Activated B cell treated with CpG ODN at 0.5 μM for 24 hours (primary cell): ENCODE measurements at regions of chr6 and their contacts with region 1.

Region 1: DNA sequence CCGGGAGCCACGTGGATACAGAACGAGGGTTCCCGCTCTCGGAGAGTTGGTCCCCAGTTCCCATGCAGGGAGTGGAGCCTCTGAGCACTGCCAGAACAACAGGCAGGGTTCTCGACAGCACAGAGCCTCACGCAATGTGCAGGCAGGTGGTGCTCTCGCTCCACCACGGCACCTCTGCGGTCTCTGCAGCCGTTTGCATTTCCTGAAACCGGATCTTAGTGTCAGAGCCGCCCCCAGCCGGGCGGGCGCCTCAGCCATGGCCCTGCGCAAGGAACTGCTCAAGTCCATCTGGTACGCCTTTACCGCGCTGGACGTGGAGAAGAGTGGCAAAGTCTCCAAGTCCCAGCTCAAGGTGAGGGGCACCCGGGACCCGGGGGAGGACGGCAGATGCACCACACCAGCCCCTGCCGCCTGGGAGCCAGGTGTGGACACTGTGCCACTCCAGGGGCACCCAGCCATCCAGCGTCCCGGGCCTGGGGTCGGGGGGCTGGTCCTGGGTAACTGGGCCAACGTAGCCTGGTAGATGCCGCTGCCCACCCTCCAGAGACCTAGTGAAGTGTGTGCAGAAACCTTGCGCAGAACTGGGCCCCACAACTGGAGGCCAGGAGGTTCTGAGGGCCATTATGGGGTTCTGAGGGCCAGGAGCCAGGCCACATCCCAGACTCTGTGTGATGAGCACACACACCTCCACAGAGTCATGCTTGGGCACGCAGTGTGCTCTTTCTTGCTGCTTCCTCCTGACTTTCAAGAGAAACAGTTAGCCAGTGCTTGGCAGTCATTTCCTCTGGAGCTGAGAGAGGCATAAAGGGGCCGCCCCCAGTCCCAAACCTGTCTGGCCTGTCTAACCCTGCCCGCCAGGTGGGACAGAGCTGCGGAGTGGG is at the start of gene DEF6:
- DNase-seq: peak; percentile 74
- ATAC-seq: peak; percentile 78
- H3K4me3 Mint-ChIP-seq: peak within 1 kb of the TSS; percentile 85
- H3K27ac Mint-ChIP-seq: peak within 1 kb of the TSS; percentile 97
- H3K4me1 Mint-ChIP-seq: peaks cover 56% of the 10 kb centered on the region
- H3K27me3 Mint-ChIP-seq: no peaks in the 10 kb centered on the region
- CTCF ChIP-seq: peak; percentile 42
- total RNA-seq, gene DEF6: 68.7 and 79.9 TPM in 2 replicates

Region 2: DNA sequence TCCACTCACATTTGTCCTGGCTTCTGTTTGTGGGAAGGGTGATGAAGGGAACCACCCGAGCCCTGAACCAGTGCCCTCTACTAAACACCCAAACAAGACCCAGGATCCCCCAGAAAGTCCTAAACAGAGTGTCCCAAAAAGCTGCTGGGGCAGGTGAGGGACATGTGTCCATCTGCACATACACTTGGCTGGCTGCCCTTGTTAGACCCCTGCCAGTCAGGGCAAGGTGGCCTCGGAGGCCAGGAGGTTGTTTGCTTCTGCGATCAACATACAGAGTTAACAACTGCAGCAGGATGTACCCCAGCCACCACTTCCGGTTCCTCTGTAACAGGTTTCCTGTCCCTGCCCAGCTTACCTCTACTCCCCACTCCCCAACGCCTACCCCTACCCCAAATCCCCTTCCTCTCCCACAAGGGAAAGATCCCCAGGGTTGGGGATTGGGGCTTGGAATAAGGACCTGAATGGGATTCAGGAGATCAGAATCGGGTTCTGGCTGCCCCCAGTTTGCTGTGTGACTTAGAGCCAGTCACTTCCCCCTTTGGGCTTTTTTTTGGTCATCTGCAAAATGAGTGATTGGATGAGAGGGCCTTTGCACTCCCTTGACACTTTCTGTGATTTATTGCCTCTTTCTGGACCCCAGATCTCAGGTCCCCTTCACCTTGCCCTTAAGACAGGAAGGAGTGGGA is 13.7 kb after region 1 on chr6:
- CTCF ChIA-PET with region 1: interaction called, 3 read pairs
- POLR2A ChIA-PET with region 1: interaction called, 15 read pairs
- intact Hi-C with region 1: loop called (anchors 1 kb)
- DNase-seq: no peak
- ATAC-seq: peak; percentile 67
- H3K4me3 Mint-ChIP-seq: peak overlapping the region; percentile 76
- H3K27ac Mint-ChIP-seq: peak overlapping the region; percentile 96
- H3K4me1 Mint-ChIP-seq: peaks cover 68% of the 10 kb centered on the region
- H3K27me3 Mint-ChIP-seq: no peaks in the 10 kb centered on the region
- CTCF ChIP-seq: no peak

Region 3: GRCh38 chr6:35342258-35343091 is 44.6 kb after region 1 on chr6 and contains the start of gene PPARD:
- CTCF ChIA-PET with region 1: interaction called, 11 read pairs
- POLR2A ChIA-PET with region 1: interaction called, 5 read pairs
- intact Hi-C with region 1: loop called (anchors 1 kb)
- DNase-seq: peak; percentile 99
- ATAC-seq: peak; percentile 98
- H3K4me3 Mint-ChIP-seq: peak within 1 kb of the TSS; percentile 87
- H3K27ac Mint-ChIP-seq: peak within 1 kb of the TSS; percentile 91
- H3K4me1 Mint-ChIP-seq: peaks cover 59% of the 10 kb centered on the region
- H3K27me3 Mint-ChIP-seq: no peaks in the 10 kb centered on the region
- CTCF ChIP-seq: peak; percentile 62
- total RNA-seq, gene PPARD: 20.2 and 21.4 TPM in 2 replicates

Region 4: DNA sequence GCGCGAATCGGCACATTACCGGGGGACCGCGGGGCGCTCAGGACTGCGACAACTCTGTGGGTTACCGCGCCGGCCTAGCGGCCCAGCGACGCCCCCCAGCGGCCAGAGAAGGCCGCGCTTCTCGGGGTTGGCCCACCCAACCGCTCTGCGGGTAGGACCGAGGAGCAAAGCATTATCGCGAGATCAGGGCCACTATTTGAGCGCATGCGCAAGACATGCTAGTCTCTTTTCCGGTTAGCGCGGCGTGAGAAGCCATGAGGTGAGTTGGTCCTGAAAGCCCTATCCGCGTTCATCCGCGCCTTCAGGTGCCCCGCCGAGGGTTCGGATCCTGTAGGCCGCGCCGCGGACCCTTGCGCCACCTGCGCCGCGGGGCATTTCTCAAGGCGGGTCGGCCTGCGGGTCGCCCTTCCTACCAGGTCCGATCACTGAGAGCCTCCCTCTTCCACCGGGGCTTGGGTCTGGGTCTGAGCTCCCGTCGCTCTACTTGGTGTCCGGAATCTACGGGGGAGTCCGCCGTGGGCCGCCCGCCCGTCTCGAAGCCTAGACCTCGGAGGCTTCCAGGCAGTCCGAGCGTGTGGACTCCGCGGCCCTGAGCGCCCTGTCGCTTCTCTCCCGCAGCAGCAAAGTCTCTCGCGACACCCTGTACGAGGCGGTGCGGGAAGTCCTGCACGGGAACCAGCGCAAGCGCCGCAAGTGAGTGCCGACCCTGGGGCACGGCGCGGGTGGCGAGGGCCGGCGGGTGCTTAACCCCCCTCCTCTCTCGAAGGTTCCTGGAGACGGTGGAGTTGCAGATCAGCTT is 170.5 kb after region 1 on chr6 and contains the start of gene RPL10A:
- CTCF ChIA-PET with region 1: interaction called, 18 read pairs
- POLR2A ChIA-PET with region 1: interaction called, 18 read pairs
- intact Hi-C with region 1: loop called (anchors 1 kb)
- DNase-seq: peak; percentile 87
- ATAC-seq: peak; percentile 85
- H3K4me3 Mint-ChIP-seq: peak within 1 kb of the TSS; percentile 96
- H3K27ac Mint-ChIP-seq: peak within 1 kb of the TSS; percentile 98
- H3K4me1 Mint-ChIP-seq: peaks cover 45% of the 10 kb centered on the region
- H3K27me3 Mint-ChIP-seq: no peaks in the 10 kb centered on the region
- CTCF ChIP-seq: no peak
- total RNA-seq, gene RPL10A: 2,485 and 2,644 TPM in 2 replicates

Region 5: DNA sequence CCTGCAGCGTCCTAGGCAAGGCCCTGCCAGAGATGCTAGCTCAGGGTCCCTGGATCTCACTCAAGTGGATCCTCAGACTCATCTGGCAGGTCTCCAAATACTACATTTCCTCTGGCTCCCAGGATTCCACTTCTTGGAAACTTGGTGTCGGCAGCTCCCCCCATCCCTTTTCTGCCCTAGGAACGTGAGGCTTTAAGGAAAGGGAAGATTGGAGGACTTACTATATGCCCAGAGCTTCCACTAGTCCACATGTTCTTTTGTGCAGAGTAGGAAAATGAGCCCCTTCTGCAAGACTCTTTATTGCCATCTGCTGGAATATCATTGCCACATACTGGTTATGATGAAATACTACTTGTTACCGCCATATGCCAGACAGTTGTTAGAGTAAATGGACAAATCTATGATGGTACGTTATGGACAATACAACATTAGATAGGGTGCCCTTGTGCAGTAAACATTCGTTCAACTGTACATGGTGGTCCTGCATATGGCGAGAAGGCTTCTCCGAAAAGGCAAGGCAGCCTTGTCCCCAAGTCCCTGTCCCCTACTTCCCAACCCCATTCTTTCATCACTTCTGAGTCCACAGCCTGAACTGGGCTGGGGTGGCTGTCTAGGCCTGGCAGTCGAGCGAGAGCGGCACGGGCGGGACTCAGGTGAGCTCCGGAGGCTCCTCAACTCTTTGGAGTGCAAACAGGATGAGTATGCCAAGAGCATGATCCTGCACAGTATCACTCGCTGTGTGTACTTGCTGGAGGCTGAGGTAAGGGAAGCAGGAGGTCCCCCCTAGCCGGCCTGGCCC is 439.8 kb after region 1 on chr6:
- CTCF ChIA-PET with region 1: interaction called, 4 read pairs
- POLR2A ChIA-PET with region 1: no interaction called
- intact Hi-C with region 1: loop called (anchors 1 kb)
- DNase-seq: no peak
- ATAC-seq: peak; percentile 75
- H3K4me3 Mint-ChIP-seq: no peak overlapping the region
- H3K27ac Mint-ChIP-seq: peak overlapping the region; percentile 63
- H3K4me1 Mint-ChIP-seq: peaks cover 24% of the 10 kb centered on the region
- H3K27me3 Mint-ChIP-seq: no peaks in the 10 kb centered on the region
- CTCF ChIP-seq: peak; percentile 43